Heart left ventricle (tissue), 16 donors: ENCODE measurements at regions of chr9 and their contacts with region 1.

Region 1: GRCh38 chr9:113564498-113565237 is 101.1 kb downstream of the RGS3 start:
- DNase-seq: peak; percentile 78 to 87 (median 85)
- ATAC-seq: peak; percentile 75 to 86 (median 78)
- H3K4me3 ChIP-seq: peak overlapping the region; percentile 28 to 67 (median 50)
- H3K27ac ChIP-seq: peak overlapping the region; percentile 80 to 99 (median 92)
- H3K4me1 ChIP-seq: peaks cover 24 to 81% (median 70%) of the 10 kb centered on the region in 12 donors
- H3K27me3 ChIP-seq: no peaks in the 10 kb centered on the region
- CTCF ChIP-seq: no peak
- POLR2A ChIP-seq: peak in 1 of 2 donors; percentile 27

Region 2: GRCh38 chr9:113340017-113340699 is 224.5 kb before region 1 on chr9 and contains the start of gene WDR31:
- intact Hi-C with region 1: no loop called
- DNase-seq: peak; percentile 87 to 93 (median 89)
- ATAC-seq: peak; percentile 72 to 91 (median 90)
- H3K4me3 ChIP-seq: peak within 1 kb of the TSS; percentile 43 to 99 (median 80)
- H3K27ac ChIP-seq: peak within 1 kb of the TSS; percentile 37 to 90 (median 80)
- H3K4me1 ChIP-seq: peaks cover 0 to 26% (median 12%) of the 10 kb centered on the region in 12 donors
- H3K27me3 ChIP-seq: no peaks in the 10 kb centered on the region
- CTCF ChIP-seq: peak in 1 of 12 donors; percentile 31
- POLR2A ChIP-seq: peak in 1 of 2 donors; percentile 52
- total RNA-seq, gene WDR31: 8.1 to 22.4 (median 14.4) TPM

Region 3: DNA sequence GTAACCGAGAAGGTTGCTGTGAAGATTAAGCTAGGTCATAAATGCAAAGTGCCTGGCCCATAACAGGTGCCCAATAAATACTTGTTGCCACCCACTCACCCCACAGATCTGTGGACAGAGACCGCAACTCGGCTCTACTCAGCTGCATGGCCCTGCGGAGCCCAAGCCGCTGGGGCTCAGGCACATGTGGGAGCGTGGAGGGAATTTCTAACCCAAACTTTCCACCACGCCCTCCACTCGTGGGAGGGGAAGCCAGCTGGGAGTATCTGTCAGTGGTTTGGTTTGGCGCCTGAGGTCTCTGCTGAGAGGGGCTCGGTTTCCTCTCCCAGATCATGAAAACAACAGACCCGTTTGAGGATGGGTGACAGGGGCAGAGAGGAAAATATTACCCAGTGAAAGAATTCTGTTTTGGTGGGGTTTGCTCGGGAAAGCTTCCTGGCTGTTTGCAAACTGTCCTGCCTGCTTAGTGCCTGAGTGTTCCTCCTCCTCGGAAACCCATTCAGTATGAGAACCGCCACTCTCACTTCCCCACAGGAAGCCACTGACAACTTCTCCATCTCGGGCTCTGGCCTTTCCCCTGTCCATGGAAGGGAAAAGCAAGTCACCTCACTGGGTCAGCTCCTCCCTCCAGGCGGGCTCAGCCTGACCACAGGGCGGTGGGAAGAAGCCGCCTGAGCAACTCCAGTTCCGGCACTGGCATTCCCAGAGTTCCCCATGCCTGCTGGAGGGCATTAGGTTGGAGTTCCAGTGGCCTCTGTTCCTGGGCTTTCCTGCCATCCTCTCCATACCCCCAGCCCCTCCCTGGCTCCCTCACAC is 41.0 kb before region 1 on chr9:
- intact Hi-C with region 1: loop called in 4 of 10 experiments (anchors 5 kb)
- DNase-seq: peak; percentile 69 to 81 (median 77)
- ATAC-seq: peak; percentile 17 to 69 (median 62)
- H3K4me3 ChIP-seq: peak overlapping the region in 3 of 12 donors; percentile 4 to 39 (median 17)
- H3K27ac ChIP-seq: peak overlapping the region; percentile 49 to 86 (median 80)
- H3K4me1 ChIP-seq: peaks cover 23 to 98% (median 81%) of the 10 kb centered on the region in 12 donors
- H3K27me3 ChIP-seq: no peaks in the 10 kb centered on the region
- CTCF ChIP-seq: no peak
- POLR2A ChIP-seq: no peak

Region 4: GRCh38 chr9:113541019-113541900 is 23.4 kb before region 1 on chr9:
- intact Hi-C with region 1: loop called in 1 of 10 experiments (anchors 2 kb)
- DNase-seq: peak in 3 of 5 donors; percentile 28 to 57 (median 47)
- ATAC-seq: peak in 3 of 4 donors; percentile 8 to 55 (median 49)
- H3K4me3 ChIP-seq: no peak overlapping the region
- H3K27ac ChIP-seq: peak overlapping the region in 7 of 12 donors; percentile 21 to 71 (median 65)
- H3K4me1 ChIP-seq: peaks cover 2 to 95% (median 59%) of the 10 kb centered on the region in 12 donors
- H3K27me3 ChIP-seq: no peaks in the 10 kb centered on the region
- CTCF ChIP-seq: peak in 1 of 12 donors; percentile 5
- POLR2A ChIP-seq: no peak

Region 5: DNA sequence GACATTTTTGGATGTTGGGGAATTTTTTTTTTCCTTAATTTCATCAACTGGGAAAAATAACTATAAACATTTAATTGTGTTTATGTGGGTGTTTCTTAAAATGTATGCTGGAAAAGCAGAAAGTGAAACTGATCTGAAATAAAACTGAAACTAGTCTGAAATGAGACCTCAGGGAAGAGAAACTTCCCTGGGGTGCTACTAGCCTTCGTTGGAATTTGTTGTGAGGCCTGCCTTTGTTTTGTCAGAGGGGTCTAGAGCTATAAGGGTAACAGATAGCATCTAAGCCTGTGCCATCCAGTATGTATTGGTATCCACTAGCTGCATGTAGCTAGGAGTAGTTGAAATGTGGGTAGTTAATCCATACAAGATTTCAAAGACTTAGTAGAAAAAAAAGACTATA is 321.8 kb after region 1 on chr9:
- intact Hi-C with region 1: no loop called
- DNase-seq: no peak
- ATAC-seq: peak in 2 of 4 donors; percentile 26 to 37
- H3K4me3 ChIP-seq: peak overlapping the region in 10 of 12 donors; percentile 17 to 51 (median 38)
- H3K27ac ChIP-seq: peak overlapping the region in 7 of 12 donors; percentile 30 to 59 (median 43)
- H3K4me1 ChIP-seq: peaks cover 0 to 38% (median 7%) of the 10 kb centered on the region in 12 donors
- H3K27me3 ChIP-seq: no peaks in the 10 kb centered on the region
- CTCF ChIP-seq: no peak
- POLR2A ChIP-seq: no peak